CD8-positive, alpha-beta T cell (primary cell): ENCODE measurements at regions of chr1 and their contacts with region 1.

Region 1: DNA sequence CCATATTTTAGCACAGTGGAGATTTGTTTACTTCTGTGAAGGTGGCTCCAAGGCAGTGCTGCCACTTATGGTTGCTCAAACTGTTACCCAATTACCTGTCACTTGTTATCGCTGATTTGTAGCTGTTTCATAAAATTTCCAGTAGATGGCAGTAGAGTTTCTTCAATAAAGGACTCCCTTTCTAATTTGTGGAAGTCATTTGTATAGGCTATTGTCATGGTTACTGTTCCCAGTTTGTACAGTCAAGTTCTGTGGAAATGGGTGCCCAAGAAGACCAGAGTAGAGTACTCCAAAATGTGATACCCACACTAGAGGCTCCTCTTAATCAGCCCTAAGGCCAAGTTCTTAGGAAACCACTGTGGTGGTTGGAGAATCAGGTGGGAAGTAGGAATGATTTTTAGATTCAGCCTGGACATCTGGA is 186.1 kb downstream of the CLEC20A start:
- DNase-seq: peak in 2 of 9 experiments; percentile 16 to 42
- ATAC-seq: no peak
- H3K4me3 ChIP-seq: no peak overlapping the region
- H3K4me3 Mint-ChIP-seq: no peak overlapping the region
- H3K27ac ChIP-seq: no peak overlapping the region
- H3K27ac Mint-ChIP-seq: no peak overlapping the region
- H3K4me1 ChIP-seq: no peaks in the 10 kb centered on the region
- H3K4me1 Mint-ChIP-seq: no peaks in the 10 kb centered on the region
- H3K27me3 ChIP-seq: no peaks in the 10 kb centered on the region
- H3K27me3 Mint-ChIP-seq: no peaks in the 10 kb centered on the region
- CTCF ChIP-seq: peak; percentile 54

Region 2: GRCh38 chr1:178282949-178283367 is 27.7 kb before region 1 on chr1:
- CTCF ChIA-PET with region 1: no interaction called
- POLR2A ChIA-PET with region 1: no interaction called
- intact Hi-C with region 1: no loop called
- DNase-seq: no peak
- ATAC-seq: no peak
- H3K4me3 ChIP-seq: no peak overlapping the region
- H3K4me3 Mint-ChIP-seq: no peak overlapping the region
- H3K27ac ChIP-seq: no peak overlapping the region
- H3K27ac Mint-ChIP-seq: no peak overlapping the region
- H3K4me1 ChIP-seq: no peaks in the 10 kb centered on the region
- H3K4me1 Mint-ChIP-seq: no peaks in the 10 kb centered on the region
- H3K27me3 ChIP-seq: no peaks in the 10 kb centered on the region
- H3K27me3 Mint-ChIP-seq: no peaks in the 10 kb centered on the region
- CTCF ChIP-seq: no peak

Region 3: GRCh38 chr1:178300352-178300699 is 10.4 kb before region 1 on chr1:
- CTCF ChIA-PET with region 1: interaction called, 16 read pairs
- POLR2A ChIA-PET with region 1: no interaction called
- intact Hi-C with region 1: no loop called
- DNase-seq: no peak
- ATAC-seq: no peak
- H3K4me3 ChIP-seq: no peak overlapping the region
- H3K4me3 Mint-ChIP-seq: no peak overlapping the region
- H3K27ac ChIP-seq: no peak overlapping the region
- H3K27ac Mint-ChIP-seq: no peak overlapping the region
- H3K4me1 ChIP-seq: no peaks in the 10 kb centered on the region
- H3K4me1 Mint-ChIP-seq: no peaks in the 10 kb centered on the region
- H3K27me3 ChIP-seq: no peaks in the 10 kb centered on the region
- H3K27me3 Mint-ChIP-seq: peaks cover 3% of the 10 kb centered on the region
- CTCF ChIP-seq: no peak